SK-N-SH (cell line): ENCODE measurements at regions of chr16 and their contacts with region 1.

Region 1: DNA sequence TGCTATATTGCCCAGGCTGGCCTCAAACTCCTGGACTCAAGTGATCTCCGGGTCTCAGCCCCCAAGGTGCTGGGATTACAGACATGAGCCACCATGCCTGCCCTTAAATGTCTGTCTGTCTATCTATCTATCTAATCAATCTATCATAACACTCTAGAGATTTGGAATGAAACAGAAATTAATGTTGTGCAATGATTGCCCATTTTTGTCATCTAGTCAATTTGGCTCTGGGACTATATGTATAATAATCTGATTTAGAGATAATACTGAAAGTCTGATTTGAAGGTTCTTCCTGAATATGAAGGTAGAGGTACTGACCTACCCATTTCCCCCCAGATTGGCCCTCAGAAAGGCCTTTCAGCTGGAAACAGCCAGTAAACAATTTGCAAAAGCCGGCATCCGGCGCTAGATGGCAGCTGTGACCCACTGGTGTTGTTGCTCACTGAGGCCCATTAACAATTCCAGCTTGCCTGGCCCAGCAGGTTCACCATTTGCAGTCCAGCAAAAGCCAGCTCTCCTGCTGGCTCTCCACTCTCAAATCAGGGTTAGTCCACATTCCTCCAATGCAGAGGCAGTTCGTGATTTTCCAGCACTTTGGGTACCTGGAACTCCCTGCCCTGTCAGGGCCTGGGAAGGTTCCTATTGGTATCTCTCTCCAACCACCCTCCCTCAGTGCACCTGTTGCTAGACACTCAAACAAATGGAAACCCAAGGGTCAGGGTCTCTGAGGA is 22.9 kb upstream of the C16orf87 start:
- DNase-seq: peak; percentile 83
- H3K4me3 ChIP-seq: no peak overlapping the region; a peak in 1 of 4 replicates
- H3K27ac ChIP-seq: no peak overlapping the region
- H3K4me1 ChIP-seq: peaks cover 0 to 2% of the 10 kb centered on the region in 2 experiments; a peak in 1 of 4 replicates
- H3K27me3 ChIP-seq: no peaks in the 10 kb centered on the region
- CTCF ChIP-seq: peak; percentile 86
- EP300 ChIP-seq: no peak
- RAD21 ChIP-seq: peak; percentile 99

Region 2: DNA sequence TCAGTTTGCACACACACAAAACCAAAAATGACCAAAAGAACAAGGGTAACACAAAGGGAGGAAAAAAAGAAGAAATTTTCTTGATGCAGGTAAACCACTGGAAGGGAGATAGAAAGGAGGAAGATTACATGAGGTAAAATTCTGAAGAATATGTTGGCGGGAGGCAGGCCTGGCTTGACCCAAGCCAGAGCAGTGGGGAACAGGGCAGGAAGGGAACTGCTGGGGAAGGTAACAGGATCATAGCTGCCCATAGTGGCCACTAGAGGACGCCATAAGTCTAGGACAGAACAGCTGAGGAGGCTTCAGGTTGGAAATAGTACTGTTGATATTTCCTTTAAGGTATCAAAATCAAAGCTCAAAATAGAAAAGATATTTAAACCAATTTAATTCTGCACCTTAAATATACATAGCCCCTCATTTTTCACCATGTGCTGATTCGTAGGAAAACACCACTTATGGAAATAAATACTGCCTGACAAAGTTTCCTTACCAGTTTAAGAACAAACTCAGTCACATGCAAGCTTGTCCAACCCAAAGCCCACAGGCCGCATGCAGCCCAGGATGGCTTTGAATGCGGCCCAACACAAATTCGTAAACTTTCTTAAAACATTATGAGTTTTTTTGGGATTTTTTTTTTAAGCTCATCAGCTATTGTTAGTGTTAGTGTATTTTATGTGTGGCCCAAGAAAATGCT is 180.4 kb before region 1 on chr16:
- CTCF ChIA-PET with region 1: interaction called, 15 read pairs
- POLR2A ChIA-PET with region 1: no interaction called
- DNase-seq: peak; percentile 75
- H3K4me3 ChIP-seq: peak overlapping the region in 1 of 2 experiments; percentile 27; a peak in 1 of 4 replicates
- H3K27ac ChIP-seq: no peak overlapping the region
- H3K4me1 ChIP-seq: no peaks in the 10 kb centered on the region
- H3K27me3 ChIP-seq: no peaks in the 10 kb centered on the region
- CTCF ChIP-seq: peak; percentile 98
- EP300 ChIP-seq: no peak
- RAD21 ChIP-seq: peak; percentile 94

Region 3: GRCh38 chr16:46808997-46809396 is 44.9 kb before region 1 on chr16:
- CTCF ChIA-PET with region 1: no interaction called
- POLR2A ChIA-PET with region 1: no interaction called
- DNase-seq: no peak
- H3K4me3 ChIP-seq: no peak overlapping the region
- H3K27ac ChIP-seq: no peak overlapping the region
- H3K4me1 ChIP-seq: peaks cover 2 to 13% of the 10 kb centered on the region in 2 experiments; a peak in 2 of 4 replicates
- H3K27me3 ChIP-seq: no peaks in the 10 kb centered on the region
- CTCF ChIP-seq: no peak
- EP300 ChIP-seq: no peak
- RAD21 ChIP-seq: no peak

Region 4: DNA sequence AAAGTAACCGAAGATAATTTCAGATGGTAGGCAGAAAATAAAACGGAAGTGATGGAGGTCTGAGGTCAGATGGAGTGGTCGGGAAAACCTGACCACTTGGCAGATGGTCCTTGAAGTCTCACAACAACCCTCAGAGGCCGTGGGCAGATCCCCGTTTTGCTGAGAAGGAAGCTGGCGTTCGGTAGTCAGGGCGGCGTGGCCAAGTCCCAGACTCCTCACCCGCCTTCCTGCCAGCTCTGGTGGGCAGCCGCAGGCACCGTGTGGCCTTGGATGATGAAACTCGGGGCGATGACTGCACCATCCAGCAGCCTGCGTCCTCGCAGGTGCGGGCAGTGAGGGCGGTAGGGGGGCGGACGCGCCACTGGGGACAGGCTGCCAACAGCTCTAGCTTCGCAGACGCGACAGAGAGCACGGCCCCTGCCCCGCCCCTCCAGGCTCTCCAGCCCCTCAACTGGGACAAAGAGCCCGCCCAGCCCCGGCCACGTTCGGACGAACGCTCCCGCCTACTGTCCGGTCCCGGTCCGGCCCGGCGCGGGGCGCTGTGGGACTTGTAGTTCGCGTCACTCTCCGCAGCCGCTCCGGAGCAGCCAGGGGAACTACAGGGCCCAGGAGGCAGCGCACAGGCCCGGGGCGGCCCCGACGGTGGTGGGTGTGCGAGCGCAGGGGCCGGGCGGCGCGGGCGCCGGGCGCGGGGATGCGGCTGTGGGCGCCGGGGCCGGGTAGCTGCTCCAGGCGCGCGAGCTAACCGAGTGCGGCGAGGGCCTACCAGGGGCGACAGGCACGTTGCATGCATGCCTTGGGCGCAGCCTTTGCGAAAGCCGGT is 30.0 kb after region 1 on chr16 and contains the start of gene GPT2:
- CTCF ChIA-PET with region 1: interaction called, 35 read pairs
- POLR2A ChIA-PET with region 1: no interaction called
- DNase-seq: peak; percentile 94
- H3K4me3 ChIP-seq: peak within 1 kb of the TSS; percentile 84 to 88
- H3K27ac ChIP-seq: peak within 1 kb of the TSS; percentile 58 to 90; a peak in 3 of 4 replicates
- H3K4me1 ChIP-seq: peaks cover 11 to 25% of the 10 kb centered on the region in 2 experiments; a peak in 2 of 4 replicates
- H3K27me3 ChIP-seq: no peaks in the 10 kb centered on the region
- CTCF ChIP-seq: no peak
- EP300 ChIP-seq: no peak; a peak in 1 of 4 replicates
- RAD21 ChIP-seq: no peak
- polyA plus RNA-seq, gene GPT2: 19.9 and 21.9 TPM in 2 replicates

Region 5: GRCh38 chr16:46908540-46909372 is 54.9 kb after region 1 on chr16:
- CTCF ChIA-PET with region 1: interaction called, 231 read pairs
- POLR2A ChIA-PET with region 1: interaction called, 4 read pairs
- DNase-seq: peak; percentile 84
- H3K4me3 ChIP-seq: no peak overlapping the region
- H3K27ac ChIP-seq: no peak overlapping the region
- H3K4me1 ChIP-seq: no peaks in the 10 kb centered on the region; a peak in 1 of 4 replicates
- H3K27me3 ChIP-seq: no peaks in the 10 kb centered on the region
- CTCF ChIP-seq: peak; percentile 66
- EP300 ChIP-seq: no peak
- RAD21 ChIP-seq: peak; percentile 71

Region 6: DNA sequence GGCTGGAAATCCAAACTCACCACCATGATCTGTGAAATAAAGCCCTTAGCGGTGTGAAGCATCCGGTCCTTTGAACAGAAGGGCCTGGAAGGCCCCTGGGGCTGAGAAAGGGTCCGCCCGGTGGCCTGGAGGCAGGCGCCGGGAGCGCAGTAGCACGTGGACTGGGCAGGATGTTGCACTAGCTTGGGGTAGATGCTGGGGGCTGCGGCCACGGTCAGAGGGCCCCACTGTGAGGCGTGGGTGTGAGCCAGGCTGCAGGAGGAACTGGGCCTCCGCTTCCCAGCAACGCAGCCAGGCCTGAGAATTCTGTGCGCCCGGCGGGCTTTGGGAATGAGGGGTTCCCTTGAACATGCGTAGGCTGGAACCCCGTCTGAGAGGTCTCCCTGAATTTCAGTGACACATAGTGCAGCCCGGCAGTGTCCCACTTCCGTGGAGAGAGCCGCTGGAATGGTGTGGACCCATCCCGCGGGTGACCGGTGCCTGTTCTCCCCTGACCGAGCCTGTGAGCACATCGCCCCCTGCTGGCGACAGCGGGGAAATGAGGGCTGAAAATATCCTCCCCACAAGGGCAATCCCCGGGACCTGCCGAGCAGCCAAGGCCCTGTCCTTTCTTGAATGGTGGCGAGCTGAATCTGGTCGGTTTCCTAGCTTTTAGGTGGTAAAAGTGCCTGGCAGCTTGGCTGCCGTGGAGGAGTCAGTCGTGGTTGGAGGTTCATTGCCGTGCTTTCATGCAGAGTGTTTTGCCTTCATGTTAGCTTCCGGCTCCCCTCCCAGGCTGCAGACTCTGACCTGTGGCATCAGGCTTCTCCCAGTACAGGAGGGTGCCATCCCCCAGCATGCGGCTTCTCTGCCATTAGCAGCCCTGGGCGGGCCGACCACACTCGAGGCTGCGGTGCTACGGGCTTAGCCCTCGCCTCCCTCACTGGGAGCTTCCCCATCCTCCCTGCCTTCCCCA is 75.8 kb after region 1 on chr16:
- CTCF ChIA-PET with region 1: interaction called, 71 read pairs
- POLR2A ChIA-PET with region 1: interaction called, 4 read pairs
- DNase-seq: peak; percentile 92
- H3K4me3 ChIP-seq: no peak overlapping the region; a peak in 1 of 4 replicates
- H3K27ac ChIP-seq: no peak overlapping the region
- H3K4me1 ChIP-seq: no peaks in the 10 kb centered on the region
- H3K27me3 ChIP-seq: no peaks in the 10 kb centered on the region
- CTCF ChIP-seq: peak; percentile 91
- EP300 ChIP-seq: no peak
- RAD21 ChIP-seq: peak; percentile 65

Region 7: DNA sequence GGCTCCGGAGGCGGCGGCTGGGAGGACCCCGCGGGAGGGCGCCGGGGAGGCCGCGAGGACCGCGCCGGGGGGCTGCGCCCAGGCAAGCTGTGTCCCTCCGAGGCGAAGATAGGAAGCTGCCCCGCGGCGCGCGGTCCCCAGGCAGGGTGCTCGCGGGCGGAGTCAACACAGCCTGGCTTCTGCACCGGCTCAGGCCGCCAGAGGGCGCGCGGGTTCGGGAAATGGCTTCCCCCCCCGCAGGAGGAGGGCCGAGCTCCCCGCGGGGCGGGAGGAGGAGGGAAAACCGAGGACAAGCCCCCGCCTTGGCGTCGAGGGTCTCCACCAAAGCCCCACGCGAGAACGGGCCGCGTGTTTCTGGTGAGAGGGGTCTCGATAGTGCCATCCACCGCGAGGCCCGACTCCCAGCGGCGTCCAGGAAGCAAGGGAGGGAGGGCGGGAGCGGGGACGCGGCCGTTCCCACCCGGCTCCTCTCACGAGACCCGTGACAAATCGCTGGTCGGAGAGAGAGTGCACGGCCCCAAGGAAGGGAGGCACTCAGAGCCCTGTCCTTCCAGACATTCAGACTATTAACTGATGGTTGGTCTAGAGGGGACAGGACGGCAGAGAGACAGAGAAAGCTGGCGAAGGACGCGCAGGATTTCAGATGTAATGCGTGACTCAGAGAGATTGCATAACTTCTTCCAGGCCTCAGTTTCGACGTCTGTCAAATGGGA is 184.0 kb after region 1 on chr16:
- CTCF ChIA-PET with region 1: interaction called, 10 read pairs
- POLR2A ChIA-PET with region 1: no interaction called
- DNase-seq: peak; percentile 98
- H3K4me3 ChIP-seq: peak overlapping the region; percentile 63 to 73
- H3K27ac ChIP-seq: no peak overlapping the region
- H3K4me1 ChIP-seq: no peaks in the 10 kb centered on the region
- H3K27me3 ChIP-seq: no peaks in the 10 kb centered on the region
- CTCF ChIP-seq: peak; percentile 83
- EP300 ChIP-seq: no peak
- RAD21 ChIP-seq: peak; percentile 72